Right lobe of liver (tissue), 6 donors: ENCODE measurements at regions of chr15 and their contacts with region 1.

Region 1: DNA sequence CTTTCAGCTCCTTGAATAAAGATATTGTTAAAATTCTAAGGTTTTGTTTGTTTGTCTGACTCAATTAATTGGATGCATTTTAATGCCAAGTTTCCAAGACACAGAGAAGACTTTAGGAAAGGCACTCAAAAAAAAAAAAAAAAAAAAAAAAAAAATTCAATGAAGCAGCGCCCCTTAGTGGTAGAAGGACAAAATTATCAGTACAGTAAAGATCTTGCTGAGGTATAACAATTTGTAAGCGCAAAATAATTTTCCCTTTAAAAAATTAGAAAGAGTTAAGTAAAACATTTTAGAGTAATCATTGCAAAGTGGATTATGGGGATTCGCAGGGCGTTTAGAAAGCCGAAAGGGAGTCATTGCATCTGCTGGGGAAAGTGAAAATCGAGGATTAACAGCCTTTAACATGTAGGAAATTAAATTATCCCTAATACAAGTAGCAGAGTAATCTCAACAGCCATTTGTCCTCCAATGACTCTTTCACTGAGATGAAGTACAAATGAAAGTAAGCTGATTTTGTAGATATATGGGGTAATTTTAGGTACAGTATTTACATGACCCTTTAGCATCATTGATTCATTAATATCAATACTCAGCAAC is 5.8 kb upstream of the DIS3L start:
- DNase-seq: no peak
- ATAC-seq: peak in 2 of 4 donors; percentile 41 to 53
- H3K4me3 ChIP-seq: no peak overlapping the region
- H3K27ac ChIP-seq: no peak overlapping the region
- H3K4me1 ChIP-seq: peaks cover 0 to 8% (median 0%) of the 10 kb centered on the region in 4 donors
- H3K27me3 ChIP-seq: no peaks in the 10 kb centered on the region
- CTCF ChIP-seq: peak; percentile 26 to 66 (median 62)
- POLR2A ChIP-seq: no peak

Region 2: DNA sequence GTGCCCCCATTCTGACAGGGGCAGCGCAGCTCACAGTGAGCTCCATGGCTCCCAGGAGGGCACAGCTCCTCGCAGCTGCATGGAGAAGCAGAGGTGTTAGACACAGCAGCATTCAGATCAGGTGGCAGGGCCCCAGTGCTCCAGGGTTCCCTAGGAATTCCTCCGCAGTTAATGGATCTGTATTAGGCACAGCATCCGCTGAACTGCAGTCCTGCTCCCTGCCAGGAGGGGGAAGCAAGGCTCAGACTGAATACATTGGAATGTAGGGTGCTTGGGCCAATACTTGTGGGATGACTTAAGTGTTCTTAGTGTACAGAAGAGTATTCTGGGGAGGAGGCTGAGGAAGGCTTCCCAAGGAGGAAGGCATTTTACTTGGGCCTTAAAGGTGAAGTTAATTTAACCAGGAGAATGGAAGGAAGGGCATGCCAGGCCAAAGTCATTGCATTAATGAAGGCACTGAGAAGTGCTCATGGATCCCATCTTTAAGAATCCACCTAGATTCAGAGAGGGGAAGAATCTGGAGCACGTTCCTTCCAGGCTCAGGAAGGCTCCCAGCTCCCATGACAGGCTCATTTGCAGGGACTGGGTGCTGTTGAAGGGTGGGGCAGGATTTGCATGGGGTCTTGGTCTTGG is 306.6 kb before region 1 on chr15:
- intact Hi-C with region 1: loop called in 1 of 2 experiments (anchors 10 kb)
- DNase-seq: peak in 2 of 3 donors; percentile 48 to 59
- ATAC-seq: peak; percentile 66 to 85 (median 78)
- H3K4me3 ChIP-seq: no peak overlapping the region
- H3K27ac ChIP-seq: no peak overlapping the region
- H3K4me1 ChIP-seq: no peaks in the 10 kb centered on the region
- H3K27me3 ChIP-seq: peaks cover 0 to 4% of the 10 kb centered on the region in 2 donors
- CTCF ChIP-seq: peak; percentile 48 to 63 (median 54)
- POLR2A ChIP-seq: no peak

Region 3: GRCh38 chr15:66072616-66073361 is 214.8 kb before region 1 on chr15:
- intact Hi-C with region 1: no loop called
- DNase-seq: peak in 1 of 3 donors; percentile 23
- ATAC-seq: no peak
- H3K4me3 ChIP-seq: no peak overlapping the region
- H3K27ac ChIP-seq: no peak overlapping the region
- H3K4me1 ChIP-seq: no peaks in the 10 kb centered on the region
- H3K27me3 ChIP-seq: no peaks in the 10 kb centered on the region
- CTCF ChIP-seq: no peak
- POLR2A ChIP-seq: no peak

Region 4: DNA sequence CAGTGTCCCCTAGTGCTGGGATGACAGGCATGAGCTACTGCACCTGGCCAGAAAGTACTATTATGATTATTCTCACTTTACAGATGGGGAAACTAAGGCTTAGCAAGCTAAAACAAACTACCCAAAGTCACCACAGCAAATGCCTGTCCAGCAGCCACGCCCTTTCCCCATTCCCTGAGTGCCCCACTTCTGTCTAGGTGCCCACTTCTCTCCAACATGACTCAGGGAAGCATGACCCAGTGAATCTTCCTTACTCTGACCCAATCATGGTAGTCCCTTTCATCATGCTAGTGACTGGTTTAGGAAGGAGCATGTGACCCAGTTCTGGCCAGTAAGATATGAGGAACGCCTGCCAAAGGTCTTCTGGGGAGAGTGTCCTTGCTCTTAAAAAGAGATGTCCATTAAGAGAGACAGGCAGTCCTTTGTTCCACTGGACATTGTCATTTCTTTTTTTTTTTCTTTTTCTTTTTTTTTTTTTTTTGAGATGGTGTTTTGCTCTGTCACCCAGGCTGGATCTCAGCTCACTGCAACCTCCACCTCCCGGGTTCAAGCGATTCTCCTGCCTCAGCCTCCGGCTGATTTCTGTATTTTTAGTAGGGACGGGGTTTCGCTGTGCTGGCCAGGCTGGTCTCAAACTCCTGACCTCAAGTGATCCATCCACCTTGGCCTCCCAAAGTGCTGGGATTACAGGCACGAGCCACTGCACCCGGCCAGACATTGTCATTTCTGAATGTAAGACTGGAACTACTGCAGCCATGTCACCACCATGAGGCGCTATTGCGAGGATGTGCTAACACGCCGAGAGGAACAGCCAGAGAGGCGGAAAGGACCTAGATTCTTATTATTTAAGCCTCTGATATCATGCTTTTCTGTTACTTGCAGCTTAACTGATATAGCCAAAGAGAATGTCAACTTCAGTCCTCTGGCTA is 53.8 kb before region 1 on chr15:
- intact Hi-C with region 1: no loop called
- DNase-seq: no peak
- ATAC-seq: no peak
- H3K4me3 ChIP-seq: no peak overlapping the region
- H3K27ac ChIP-seq: no peak overlapping the region
- H3K4me1 ChIP-seq: no peaks in the 10 kb centered on the region
- H3K27me3 ChIP-seq: no peaks in the 10 kb centered on the region
- CTCF ChIP-seq: no peak
- POLR2A ChIP-seq: no peak

Region 5: GRCh38 chr15:66411190-66411589 is 123.6 kb after region 1 on chr15:
- intact Hi-C with region 1: no loop called
- DNase-seq: no peak
- ATAC-seq: peak in 3 of 4 donors; percentile 37 to 40 (median 38)
- H3K4me3 ChIP-seq: no peak overlapping the region
- H3K27ac ChIP-seq: no peak overlapping the region
- H3K4me1 ChIP-seq: peaks cover 0 to 13% (median 0%) of the 10 kb centered on the region in 4 donors
- H3K27me3 ChIP-seq: no peaks in the 10 kb centered on the region
- CTCF ChIP-seq: no peak
- POLR2A ChIP-seq: no peak